Naive thymus-derived CD4-positive, alpha-beta T cell (primary cell): ENCODE measurements at regions of chr4 and their contacts with region 1.

Region 1: GRCh38 chr4:173529477-173530325 is at the start of gene HAND2:
- DNase-seq: no peak
- ATAC-seq: no peak
- H3K4me3 ChIP-seq: no peak within 1 kb of the TSS
- H3K4me3 Mint-ChIP-seq: peak within 1 kb of the TSS; percentile 57 to 79 (median 72)
- H3K27ac ChIP-seq: no peak within 1 kb of the TSS
- H3K27ac Mint-ChIP-seq: peak within 1 kb of the TSS in 4 of 9 donors; percentile 19 to 87 (median 58)
- H3K4me1 ChIP-seq: peaks cover 4 to 6% of the 10 kb centered on the region in 2 donors
- H3K4me1 Mint-ChIP-seq: peaks cover 5 to 33% (median 27%) of the 10 kb centered on the region in 7 donors
- H3K27me3 ChIP-seq: peaks cover 9 to 52% of the 10 kb centered on the region in 2 donors
- H3K27me3 Mint-ChIP-seq: peaks cover 88 to 91% (median 90%) of the 10 kb centered on the region in 5 donors
- total RNA-seq, gene HAND2: not detected

Region 2: GRCh38 chr4:171812838-171813525 is 1716.7 kb before region 1 on chr4 and contains the start of gene GALNTL6:
- CTCF ChIA-PET with region 1: no interaction called
- POLR2A ChIA-PET with region 1: no interaction called
- intact Hi-C with region 1: loop called in 1 of 2 experiments (anchors 10 kb)
- DNase-seq: no peak
- ATAC-seq: no peak
- H3K4me3 ChIP-seq: no peak within 1 kb of the TSS
- H3K4me3 Mint-ChIP-seq: peak within 1 kb of the TSS in 2 of 10 donors; percentile 15 to 61
- H3K27ac ChIP-seq: no peak within 1 kb of the TSS
- H3K27ac Mint-ChIP-seq: no peak within 1 kb of the TSS
- H3K4me1 ChIP-seq: no peaks in the 10 kb centered on the region
- H3K4me1 Mint-ChIP-seq: peaks cover 0 to 3% (median 0%) of the 10 kb centered on the region in 7 donors
- H3K27me3 ChIP-seq: no peaks in the 10 kb centered on the region
- H3K27me3 Mint-ChIP-seq: peaks cover 23 to 36% (median 26%) of the 10 kb centered on the region in 5 donors
- total RNA-seq, gene GALNTL6: not detected

Region 3: DNA sequence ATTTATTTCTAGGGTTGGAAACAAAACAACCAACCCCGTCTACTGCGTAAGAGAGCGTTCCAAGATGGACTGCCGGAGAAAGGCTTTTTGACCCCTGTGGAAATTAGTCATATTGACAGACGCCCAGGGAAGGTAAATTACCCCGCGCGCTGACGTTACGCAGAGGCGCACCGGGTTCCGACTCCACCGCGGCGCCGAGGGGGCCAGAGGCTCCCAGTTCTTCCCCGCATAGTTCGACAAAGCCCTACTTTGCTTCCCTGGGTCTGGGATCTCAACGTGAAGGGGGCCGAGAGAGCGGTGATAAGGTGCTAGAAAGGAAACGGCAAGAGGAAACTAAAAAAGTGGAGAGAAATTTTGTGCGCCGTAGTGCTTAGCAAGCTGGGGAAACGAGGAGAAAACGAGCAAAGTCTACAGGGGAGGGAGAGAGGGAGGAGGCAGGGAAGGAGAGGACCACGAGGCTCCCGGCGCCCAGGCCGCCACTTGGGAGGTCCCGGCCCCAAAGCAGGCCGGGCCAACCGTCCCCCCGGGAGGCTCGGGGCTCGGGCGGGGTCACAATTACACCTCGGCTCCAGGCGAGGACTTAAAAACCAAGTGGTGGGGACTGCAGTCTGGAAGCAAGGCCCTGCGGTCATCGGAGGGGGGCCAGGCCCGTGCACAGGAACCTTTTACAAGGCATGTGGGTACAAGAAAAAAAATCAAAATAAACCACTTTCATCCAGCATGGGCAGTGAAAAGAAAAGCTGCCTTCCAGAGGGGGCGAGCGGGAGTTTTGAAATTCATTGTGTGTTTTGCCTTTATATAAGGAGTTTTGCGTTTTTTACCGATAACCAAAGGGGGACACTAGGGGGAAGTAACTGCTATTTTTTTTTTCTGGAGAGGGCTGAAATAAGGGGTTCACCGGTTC is 12.8 kb before region 1 on chr4:
- CTCF ChIA-PET with region 1: no interaction called
- POLR2A ChIA-PET with region 1: no interaction called
- intact Hi-C with region 1: loop called in 1 of 2 experiments (anchors 2 kb)
- DNase-seq: no peak
- ATAC-seq: no peak
- H3K4me3 ChIP-seq: no peak overlapping the region
- H3K4me3 Mint-ChIP-seq: peak overlapping the region in 5 of 10 donors; percentile 3 to 61 (median 19)
- H3K27ac ChIP-seq: no peak overlapping the region
- H3K27ac Mint-ChIP-seq: peak overlapping the region in 3 of 9 donors; percentile 48 to 76 (median 62)
- H3K4me1 ChIP-seq: peaks cover 0 to 1% of the 10 kb centered on the region in 2 donors
- H3K4me1 Mint-ChIP-seq: peaks cover 0 to 28% (median 7%) of the 10 kb centered on the region in 7 donors
- H3K27me3 ChIP-seq: peaks cover 11 to 39% of the 10 kb centered on the region in 2 donors
- H3K27me3 Mint-ChIP-seq: peaks cover 84 to 99% (median 92%) of the 10 kb centered on the region in 5 donors

Region 4: DNA sequence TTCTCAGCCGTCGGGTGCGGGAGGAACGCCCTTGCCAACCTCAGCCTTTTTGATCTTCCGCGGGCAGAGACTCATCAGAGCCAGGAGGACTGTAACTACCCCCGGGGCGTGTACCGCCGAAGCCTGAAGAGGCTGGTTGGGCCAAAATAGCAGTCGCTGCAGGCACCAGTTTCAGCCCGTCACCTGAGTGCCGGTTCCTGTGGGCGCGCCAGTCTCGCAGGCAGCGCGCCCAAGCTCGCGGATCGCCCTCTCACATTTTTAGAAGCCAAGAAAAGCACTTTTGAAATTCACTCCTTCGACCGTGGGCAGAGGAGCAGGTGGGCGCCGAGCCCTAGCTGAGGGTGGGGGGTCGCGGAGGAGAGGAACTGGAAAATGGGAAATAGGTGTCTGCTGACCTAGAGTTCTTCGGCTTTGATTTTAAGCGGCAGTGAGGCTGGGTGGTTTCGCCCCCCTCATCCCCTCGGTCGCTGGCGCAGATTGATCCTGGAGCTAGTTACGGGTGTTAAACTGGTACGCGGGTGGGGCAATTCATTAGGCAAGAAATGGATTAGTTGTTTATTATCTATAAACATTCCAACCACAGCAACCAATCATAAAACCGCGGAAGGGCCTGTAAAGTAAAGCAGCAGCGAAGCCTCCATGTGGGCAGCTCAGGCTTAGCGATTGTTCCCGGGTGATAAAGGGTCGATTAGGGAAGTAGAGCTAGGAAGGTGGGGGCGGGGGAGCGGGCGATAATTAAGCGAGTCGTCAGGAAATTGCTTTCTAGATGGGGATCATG is 684.6 kb after region 1 on chr4:
- CTCF ChIA-PET with region 1: no interaction called
- POLR2A ChIA-PET with region 1: no interaction called
- intact Hi-C with region 1: loop called in 1 of 2 experiments (anchors 2 kb)
- DNase-seq: peak in 4 of 9 donors; percentile 14 to 23 (median 20)
- ATAC-seq: peak; percentile 20
- H3K4me3 ChIP-seq: peak overlapping the region; percentile 13
- H3K4me3 Mint-ChIP-seq: peak overlapping the region; percentile 21 to 75 (median 61)
- H3K27ac ChIP-seq: no peak overlapping the region
- H3K27ac Mint-ChIP-seq: peak overlapping the region in 4 of 9 donors; percentile 2 to 56 (median 22)
- H3K4me1 ChIP-seq: peaks cover 23 to 35% of the 10 kb centered on the region in 2 donors
- H3K4me1 Mint-ChIP-seq: peaks cover 39 to 62% (median 50%) of the 10 kb centered on the region in 7 donors
- H3K27me3 ChIP-seq: peaks cover 25 to 66% of the 10 kb centered on the region in 2 donors
- H3K27me3 Mint-ChIP-seq: peaks cover 90 to 98% (median 97%) of the 10 kb centered on the region in 5 donors

Region 5: DNA sequence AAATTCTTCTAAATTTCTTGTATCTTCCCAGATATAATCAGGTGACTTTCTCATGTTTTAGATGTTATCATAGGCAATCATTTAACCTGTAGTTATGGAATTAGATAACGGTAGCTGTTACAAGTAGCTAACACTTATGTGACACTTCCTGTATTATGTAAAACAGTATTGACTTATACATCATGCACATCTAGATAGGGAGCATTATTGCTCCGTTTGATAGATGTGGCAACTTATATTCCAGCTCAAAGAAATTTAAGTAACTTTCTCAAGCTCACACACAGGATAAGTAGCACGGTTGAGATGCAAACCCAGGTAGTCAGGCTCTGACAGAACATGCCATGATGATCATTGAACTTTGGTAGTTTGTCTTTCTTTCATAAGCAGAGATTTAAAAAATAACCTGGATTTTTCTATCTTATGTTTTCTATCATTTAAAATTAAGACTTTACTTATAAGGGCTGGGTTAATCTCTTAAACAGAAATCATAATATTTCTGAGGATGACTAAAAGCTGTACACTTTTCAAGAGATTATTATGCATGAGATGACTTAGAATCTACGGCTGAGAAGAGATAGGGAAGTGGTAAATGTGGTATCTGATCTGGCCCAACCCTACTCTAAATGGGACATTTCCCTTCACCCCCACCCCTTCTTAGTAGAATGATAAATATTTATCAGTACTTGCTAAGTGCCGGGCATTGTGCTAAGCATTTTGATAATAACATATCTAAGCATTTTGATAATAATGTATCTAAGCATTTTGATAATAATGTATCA is 1061.7 kb after region 1 on chr4:
- CTCF ChIA-PET with region 1: no interaction called
- POLR2A ChIA-PET with region 1: no interaction called
- intact Hi-C with region 1: no loop called
- DNase-seq: peak in 4 of 9 donors; percentile 1 to 19 (median 8)
- ATAC-seq: peak; percentile 90
- H3K4me3 ChIP-seq: no peak overlapping the region
- H3K4me3 Mint-ChIP-seq: peak overlapping the region in 7 of 10 donors; percentile 7 to 60 (median 50)
- H3K27ac ChIP-seq: no peak overlapping the region
- H3K27ac Mint-ChIP-seq: peak overlapping the region in 6 of 9 donors; percentile 39 to 89 (median 64)
- H3K4me1 ChIP-seq: no peaks in the 10 kb centered on the region
- H3K4me1 Mint-ChIP-seq: peaks cover 6 to 15% (median 10%) of the 10 kb centered on the region in 7 donors
- H3K27me3 ChIP-seq: no peaks in the 10 kb centered on the region
- H3K27me3 Mint-ChIP-seq: peaks cover 0 to 2% (median 0%) of the 10 kb centered on the region in 5 donors